ENCODE measurements at regions of chr9 and their contacts with region 1.

Region 1: DNA sequence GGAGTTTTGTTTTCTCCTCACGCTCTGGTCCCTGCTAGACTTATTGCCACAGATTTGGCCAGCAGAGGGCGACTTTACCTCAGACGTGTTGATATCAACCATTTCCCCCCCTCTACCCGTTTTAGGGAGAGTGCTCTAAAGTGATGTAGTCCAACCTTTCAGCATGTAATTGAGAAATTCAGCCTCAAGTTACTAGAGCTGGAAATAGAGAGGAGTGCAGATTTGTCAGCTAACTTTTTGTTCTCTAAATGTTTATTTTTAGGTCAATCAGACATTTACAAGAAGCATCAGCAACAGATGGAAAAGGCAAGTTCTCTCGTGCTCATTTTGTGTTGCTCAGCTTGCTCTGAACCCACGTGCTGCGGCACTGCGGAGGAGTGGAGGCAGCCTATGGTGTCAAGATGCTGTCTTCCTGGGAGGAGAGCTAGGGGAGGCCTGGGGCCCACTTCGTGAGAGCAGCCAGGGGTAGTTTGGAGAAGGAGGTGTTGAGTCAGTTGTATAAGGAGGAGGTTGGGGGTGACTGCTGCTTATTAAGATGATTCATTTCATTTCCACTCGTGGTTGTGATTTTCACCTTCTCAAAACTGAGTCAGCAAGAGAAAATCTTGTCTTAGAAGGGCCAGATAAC is 53.6 kb downstream of the GPR107 start:
- DNase-seq: peak; percentile 69 to 87 (median 75)
- H3K4me3 ChIP-seq: no peak overlapping the region
- H3K4me3 Mint-ChIP-seq: peak overlapping the region in 6 of 7 donors; percentile 26 to 55 (median 43)
- H3K27ac ChIP-seq: no peak overlapping the region
- H3K27ac Mint-ChIP-seq: peak overlapping the region; percentile 40 to 96 (median 82)
- H3K4me1 ChIP-seq: peaks cover 7% of the 10 kb centered on the region
- H3K4me1 Mint-ChIP-seq: peaks cover 17 to 32% (median 19%) of the 10 kb centered on the region in 3 donors
- H3K27me3 ChIP-seq: no peaks in the 10 kb centered on the region
- H3K27me3 Mint-ChIP-seq: no peaks in the 10 kb centered on the region

Region 2: DNA sequence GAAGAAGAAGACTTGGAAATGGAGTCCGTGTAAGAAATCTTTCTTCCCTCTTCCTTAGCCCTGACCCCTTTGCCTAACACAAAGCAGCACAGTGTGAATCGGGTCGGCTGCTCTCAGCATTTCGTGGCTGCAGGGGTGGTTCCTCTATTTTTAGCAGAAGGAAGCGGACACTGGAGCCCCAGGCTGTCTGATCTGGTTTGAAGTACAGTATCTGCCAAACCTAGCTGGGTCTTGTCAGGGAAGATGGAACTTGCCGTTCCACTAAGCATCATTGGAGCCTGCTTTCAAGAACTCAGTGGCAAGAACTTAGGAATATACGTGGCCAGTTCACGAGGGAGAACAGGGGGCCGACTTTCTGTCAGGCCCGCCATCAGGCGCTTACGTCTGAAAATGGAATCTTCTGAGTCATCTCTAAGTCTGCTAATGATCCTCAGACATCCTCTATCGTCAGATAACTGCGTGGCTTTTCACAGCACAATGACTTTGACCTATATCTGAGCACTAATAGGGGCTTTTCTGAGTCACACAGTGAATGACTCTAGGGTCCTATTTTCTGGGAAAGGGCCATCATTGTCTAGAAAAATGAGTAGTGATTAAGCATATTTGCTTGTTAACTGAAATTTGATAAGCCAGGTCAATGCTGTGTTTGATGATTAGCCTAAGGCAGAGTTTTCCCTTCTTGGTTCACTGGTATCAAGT is 21.5 kb after region 1 on chr9:
- CTCF ChIA-PET with region 1: interaction called, 18 read pairs
- POLR2A ChIA-PET with region 1: no interaction called
- DNase-seq: peak; percentile 36 to 79 (median 55)
- H3K4me3 ChIP-seq: peak overlapping the region; percentile 40
- H3K4me3 Mint-ChIP-seq: peak overlapping the region; percentile 77 to 94 (median 86)
- H3K27ac ChIP-seq: peak overlapping the region; percentile 93
- H3K27ac Mint-ChIP-seq: peak overlapping the region; percentile 99 to 100 (median 100)
- H3K4me1 ChIP-seq: peaks cover 56% of the 10 kb centered on the region
- H3K4me1 Mint-ChIP-seq: peaks cover 60 to 70% (median 63%) of the 10 kb centered on the region in 3 donors
- H3K27me3 ChIP-seq: no peaks in the 10 kb centered on the region
- H3K27me3 Mint-ChIP-seq: peaks cover 0 to 4% of the 10 kb centered on the region in 2 donors

Region 3: GRCh38 chr9:130235897-130236668 is 128.7 kb after region 1 on chr9:
- CTCF ChIA-PET with region 1: interaction called, 86 read pairs
- POLR2A ChIA-PET with region 1: interaction called, 4 read pairs
- DNase-seq: peak; percentile 53 to 77 (median 63)
- H3K4me3 ChIP-seq: no peak overlapping the region
- H3K4me3 Mint-ChIP-seq: peak overlapping the region in 5 of 7 donors; percentile 23 to 59 (median 44)
- H3K27ac ChIP-seq: no peak overlapping the region
- H3K27ac Mint-ChIP-seq: peak overlapping the region in 1 of 8 donors; percentile 54
- H3K4me1 ChIP-seq: peaks cover 15% of the 10 kb centered on the region
- H3K4me1 Mint-ChIP-seq: peaks cover 8 to 24% (median 18%) of the 10 kb centered on the region in 3 donors
- H3K27me3 ChIP-seq: no peaks in the 10 kb centered on the region
- H3K27me3 Mint-ChIP-seq: peaks cover 0 to 3% of the 10 kb centered on the region in 2 donors

Region 4: GRCh38 chr9:130243015-130243734 is 135.8 kb after region 1 on chr9:
- CTCF ChIA-PET with region 1: interaction called, 86 read pairs
- POLR2A ChIA-PET with region 1: no interaction called
- DNase-seq: peak; percentile 60 to 84 (median 74)
- H3K4me3 ChIP-seq: peak overlapping the region; percentile 12
- H3K4me3 Mint-ChIP-seq: peak overlapping the region in 6 of 7 donors; percentile 61 to 82 (median 78)
- H3K27ac ChIP-seq: no peak overlapping the region
- H3K27ac Mint-ChIP-seq: peak overlapping the region in 7 of 8 donors; percentile 7 to 89 (median 78)
- H3K4me1 ChIP-seq: peaks cover 21% of the 10 kb centered on the region
- H3K4me1 Mint-ChIP-seq: peaks cover 13 to 26% (median 24%) of the 10 kb centered on the region in 3 donors
- H3K27me3 ChIP-seq: no peaks in the 10 kb centered on the region
- H3K27me3 Mint-ChIP-seq: peaks cover 0 to 1% of the 10 kb centered on the region in 2 donors